ENCODE measurements at regions of chr1 and their contacts with region 1.

Region 1: DNA sequence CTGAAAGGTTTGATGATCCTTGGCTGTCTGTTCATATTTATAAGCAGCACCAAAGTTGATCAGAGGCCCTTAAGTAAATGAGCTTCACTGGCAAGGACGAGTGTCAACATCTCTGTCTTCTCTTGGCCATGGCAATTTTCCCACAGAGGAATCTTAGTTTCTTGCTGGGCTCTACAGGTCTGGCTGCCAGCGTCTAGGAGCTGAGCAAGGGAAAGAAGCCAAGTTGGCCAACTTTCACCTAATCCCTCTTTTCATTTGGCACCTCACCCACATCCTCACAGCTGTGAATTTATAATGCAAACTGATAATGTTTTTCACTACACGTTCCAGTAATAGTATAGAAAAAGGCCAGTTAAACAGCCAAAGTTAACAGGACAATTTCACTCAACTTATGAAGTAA is 99.0 kb upstream of the LBR start:
- DNase-seq: no peak
- ATAC-seq: no peak
- H3K4me3 Mint-ChIP-seq: no peak overlapping the region
- H3K27ac Mint-ChIP-seq: no peak overlapping the region
- H3K4me1 Mint-ChIP-seq: no peaks in the 10 kb centered on the region
- H3K27me3 Mint-ChIP-seq: peaks cover 0 to 7% (median 0%) of the 10 kb centered on the region in 5 donors

Region 2: GRCh38 chr1:225548140-225548857 is 21.4 kb after region 1 on chr1:
- POLR2A ChIA-PET with region 1: no interaction called
- DNase-seq: no peak
- ATAC-seq: no peak
- H3K4me3 Mint-ChIP-seq: no peak overlapping the region
- H3K27ac Mint-ChIP-seq: peak overlapping the region in 2 of 10 donors; percentile 65 to 75
- H3K4me1 Mint-ChIP-seq: peaks cover 6 to 11% (median 8%) of the 10 kb centered on the region in 4 donors
- H3K27me3 Mint-ChIP-seq: no peaks in the 10 kb centered on the region

Region 3: GRCh38 chr1:225875044-225875814 is 348.4 kb after region 1 on chr1:
- POLR2A ChIA-PET with region 1: interaction called, 10 read pairs
- DNase-seq: no peak
- ATAC-seq: no peak
- H3K4me3 Mint-ChIP-seq: peak overlapping the region in 9 of 10 donors; percentile 11 to 94 (median 65)
- H3K27ac Mint-ChIP-seq: peak overlapping the region; percentile 53 to 95 (median 78)
- H3K4me1 Mint-ChIP-seq: peaks cover 38 to 85% (median 68%) of the 10 kb centered on the region in 4 donors
- H3K27me3 Mint-ChIP-seq: no peaks in the 10 kb centered on the region